WTC11 (cell line): ENCODE measurements at regions of chr7 and their contacts with region 1.

Region 1: GRCh38 chr7:155804897-155805825 is 7.1 kb downstream of the SHH start:
- DNase-seq: peak; percentile 85
- ATAC-seq: peak; percentile 35
- H3K4me3 Mint-ChIP-seq: peak overlapping the region; percentile 61
- H3K27ac Mint-ChIP-seq: no peak overlapping the region
- H3K4me1 Mint-ChIP-seq: peaks cover 30% of the 10 kb centered on the region
- H3K27me3 Mint-ChIP-seq: peaks cover 94% of the 10 kb centered on the region
- CTCF ChIP-seq: peak; percentile 69

Region 2: GRCh38 chr7:155815332-155816191 is 10.4 kb after region 1 on chr7:
- CTCF ChIA-PET with region 1: interaction called, 14 read pairs
- POLR2A ChIA-PET with region 1: interaction called, 3 read pairs
- DNase-seq: peak; percentile 90
- ATAC-seq: peak; percentile 83
- H3K4me3 Mint-ChIP-seq: no peak overlapping the region
- H3K27ac Mint-ChIP-seq: no peak overlapping the region
- H3K4me1 Mint-ChIP-seq: peaks cover 35% of the 10 kb centered on the region
- H3K27me3 Mint-ChIP-seq: peaks cover 55% of the 10 kb centered on the region
- CTCF ChIP-seq: peak; percentile 76